ENCODE measurements at regions of chr5 and their contacts with region 1.

Region 1: GRCh38 chr5:150523472-150524350 is 15.8 kb downstream of the NDST1 start:
- DNase-seq: peak in 1 of 5 donors; percentile 59
- H3K4me3 ChIP-seq: no peak overlapping the region
- H3K27ac ChIP-seq: peak overlapping the region in 1 of 2 donors; percentile 38
- H3K4me1 ChIP-seq: peaks cover 15% of the 10 kb centered on the region
- H3K27me3 ChIP-seq: no peaks in the 10 kb centered on the region
- CTCF ChIP-seq: peak in 2 of 3 donors; percentile 43 to 59
- EP300 ChIP-seq: no peak
- POLR2A ChIP-seq: no peak

Region 2: GRCh38 chr5:150017226-150018005 is 506.3 kb before region 1 on chr5:
- intact Hi-C with region 1: no loop called
- DNase-seq: no peak
- H3K4me3 ChIP-seq: no peak overlapping the region
- H3K27ac ChIP-seq: no peak overlapping the region
- H3K4me1 ChIP-seq: no peaks in the 10 kb centered on the region
- H3K27me3 ChIP-seq: no peaks in the 10 kb centered on the region
- CTCF ChIP-seq: no peak
- EP300 ChIP-seq: no peak
- POLR2A ChIP-seq: no peak

Region 3: GRCh38 chr5:150175076-150175935 is 348.4 kb before region 1 on chr5:
- intact Hi-C with region 1: no loop called
- DNase-seq: no peak
- H3K4me3 ChIP-seq: no peak overlapping the region
- H3K27ac ChIP-seq: no peak overlapping the region
- H3K4me1 ChIP-seq: peaks cover 9% of the 10 kb centered on the region
- H3K27me3 ChIP-seq: no peaks in the 10 kb centered on the region
- CTCF ChIP-seq: peak in 1 of 3 donors; percentile 35
- EP300 ChIP-seq: no peak
- POLR2A ChIP-seq: no peak

Region 4: GRCh38 chr5:150486402-150487198 is 37.1 kb before region 1 on chr5:
- intact Hi-C with region 1: loop called in 2 of 4 experiments (anchors 5 kb)
- DNase-seq: peak; percentile 59 to 79 (median 77)
- H3K4me3 ChIP-seq: peak overlapping the region; percentile 74
- H3K27ac ChIP-seq: peak overlapping the region; percentile 87 to 89
- H3K4me1 ChIP-seq: peaks cover 35% of the 10 kb centered on the region
- H3K27me3 ChIP-seq: no peaks in the 10 kb centered on the region
- CTCF ChIP-seq: peak in 1 of 3 donors; percentile 12
- EP300 ChIP-seq: no peak
- POLR2A ChIP-seq: no peak

Measured in ovary (tissue), 10 donors.